Prostate gland (tissue), 2 donors: ENCODE measurements at regions of chr1 and their contacts with region 1.

Region 1: GRCh38 chr1:234533975-234534876 is 55.2 kb upstream of the TARBP1 start:
- DNase-seq: peak; percentile 94
- H3K4me3 ChIP-seq: no peak overlapping the region
- H3K27ac ChIP-seq: peak overlapping the region; percentile 99 to 100
- H3K4me1 ChIP-seq: peaks cover 54% of the 10 kb centered on the region
- H3K27me3 ChIP-seq: no peaks in the 10 kb centered on the region
- CTCF ChIP-seq: no peak
- POLR2A ChIP-seq: no peak

Region 2: DNA sequence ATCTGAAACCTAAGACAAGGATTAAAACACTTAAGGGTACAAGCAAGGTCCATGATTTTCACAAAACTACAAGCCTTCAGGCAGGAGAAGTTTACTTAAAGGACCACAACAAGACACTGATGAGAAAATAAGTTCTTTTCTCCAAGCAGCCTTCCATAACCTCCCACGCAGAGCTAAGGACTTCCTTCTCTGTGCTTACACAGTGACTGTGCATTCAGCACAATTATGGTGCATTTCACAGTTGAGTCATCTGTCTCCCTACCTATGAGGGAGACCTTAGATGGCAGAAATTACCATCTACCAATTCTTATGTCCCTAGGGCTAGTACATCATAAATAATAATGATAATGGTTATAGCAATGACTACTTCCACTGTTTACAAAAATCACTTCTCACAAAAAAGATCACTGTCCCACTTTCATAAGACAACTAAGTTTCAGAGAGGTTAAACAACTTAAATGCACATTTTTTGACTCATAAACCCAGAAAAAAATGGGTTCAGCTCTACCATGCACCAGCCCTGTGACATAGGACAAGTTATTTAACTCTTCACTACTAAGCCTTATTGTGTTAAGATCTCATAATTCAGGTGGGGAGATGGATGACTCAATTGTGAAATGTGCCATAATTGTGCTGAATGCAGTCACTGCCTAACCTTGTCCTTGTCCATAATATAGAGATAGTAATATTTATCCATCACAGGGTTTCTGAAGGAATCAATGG is 100.5 kb before region 1 on chr1:
- intact Hi-C with region 1: no loop called
- DNase-seq: no peak
- H3K4me3 ChIP-seq: no peak overlapping the region
- H3K27ac ChIP-seq: no peak overlapping the region
- H3K4me1 ChIP-seq: no peaks in the 10 kb centered on the region
- H3K27me3 ChIP-seq: no peaks in the 10 kb centered on the region
- CTCF ChIP-seq: no peak
- POLR2A ChIP-seq: no peak

Region 3: GRCh38 chr1:234579967-234580366 is 45.7 kb after region 1 on chr1:
- intact Hi-C with region 1: loop called (anchors 5 kb)
- DNase-seq: no peak
- H3K4me3 ChIP-seq: no peak overlapping the region
- H3K27ac ChIP-seq: no peak overlapping the region
- H3K4me1 ChIP-seq: no peaks in the 10 kb centered on the region
- H3K27me3 ChIP-seq: no peaks in the 10 kb centered on the region
- CTCF ChIP-seq: peak in 2 of 4 experiments; percentile 16 to 38
- POLR2A ChIP-seq: no peak

Region 4: GRCh38 chr1:234638832-234639799 is 104.9 kb after region 1 on chr1:
- intact Hi-C with region 1: no loop called
- DNase-seq: no peak
- H3K4me3 ChIP-seq: no peak overlapping the region
- H3K27ac ChIP-seq: no peak overlapping the region
- H3K4me1 ChIP-seq: no peaks in the 10 kb centered on the region
- H3K27me3 ChIP-seq: no peaks in the 10 kb centered on the region
- CTCF ChIP-seq: no peak
- POLR2A ChIP-seq: no peak

Region 5: DNA sequence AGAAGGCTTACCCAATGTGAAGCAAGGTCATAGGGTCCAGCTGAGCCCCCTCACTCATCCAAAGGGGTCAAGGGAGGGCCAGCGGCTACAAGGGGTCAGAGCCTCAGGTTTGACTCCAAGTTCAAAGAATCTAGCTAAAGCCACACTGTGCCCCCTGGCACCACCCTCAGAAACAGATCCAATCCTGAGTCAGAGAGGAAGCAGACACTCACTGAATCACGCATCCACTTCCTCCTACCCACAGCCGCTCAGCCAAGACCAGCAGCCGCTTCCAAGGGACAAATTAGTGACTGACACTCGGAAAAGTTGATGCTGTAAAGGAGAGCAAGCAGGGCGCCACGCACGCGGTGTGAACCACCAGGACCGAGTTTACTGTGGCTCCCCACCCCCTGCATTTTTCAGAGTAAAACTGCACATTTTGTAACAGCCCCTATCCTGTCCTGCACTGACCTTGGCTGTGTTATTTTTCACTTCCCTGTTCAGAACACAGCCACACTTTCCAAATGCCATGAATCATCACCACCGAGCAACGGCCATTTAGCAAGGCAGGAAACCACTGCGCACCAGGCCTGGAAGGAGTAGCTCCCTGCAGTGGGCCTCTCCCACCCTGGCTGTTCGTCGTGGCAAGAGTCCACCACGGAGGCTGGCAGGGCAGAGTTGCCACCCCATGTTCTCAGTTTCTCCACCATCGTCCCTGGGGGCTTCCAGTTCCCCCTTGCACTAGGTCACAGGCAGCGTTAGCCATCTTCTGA is 446.6 kb after region 1 on chr1:
- intact Hi-C with region 1: loop called (anchors 10 kb)
- DNase-seq: no peak
- H3K4me3 ChIP-seq: no peak overlapping the region
- H3K27ac ChIP-seq: peak overlapping the region; percentile 74
- H3K4me1 ChIP-seq: peaks cover 18% of the 10 kb centered on the region
- H3K27me3 ChIP-seq: no peaks in the 10 kb centered on the region
- CTCF ChIP-seq: no peak
- POLR2A ChIP-seq: no peak